ENCODE measurements at regions of chr1 and their contacts with region 1.

Region 1: DNA sequence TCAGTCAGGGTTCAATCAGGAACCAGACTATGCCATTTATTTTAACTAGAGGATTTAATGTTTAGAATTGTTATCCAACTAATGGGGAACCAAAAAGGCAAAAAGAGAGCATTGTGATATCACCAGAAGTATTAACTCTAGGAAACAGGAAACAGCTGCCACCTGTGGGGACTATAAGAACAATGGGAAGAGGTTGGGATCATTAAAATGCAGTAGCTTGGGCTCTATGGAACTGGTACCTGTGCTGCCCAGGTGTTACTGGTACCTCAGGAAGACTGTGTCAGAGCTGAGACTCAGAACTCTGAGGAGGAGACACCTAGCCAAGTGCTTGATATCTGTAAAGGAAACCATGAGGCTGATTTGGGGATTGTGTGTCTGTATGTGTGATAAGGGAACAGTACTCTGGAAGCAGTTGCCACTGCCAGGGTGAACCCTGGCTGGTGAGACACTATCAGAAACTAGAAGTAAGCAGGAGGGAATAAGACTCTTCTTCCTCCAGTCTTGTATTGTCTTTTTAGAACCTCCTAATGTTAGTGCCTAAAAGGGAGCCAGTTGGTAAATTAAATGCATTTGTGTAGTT is 49.4 kb downstream of the MAN1A2 start:
- DNase-seq: no peak
- ATAC-seq: no peak
- H3K4me3 ChIP-seq: no peak overlapping the region
- H3K4me3 Mint-ChIP-seq: no peak overlapping the region
- H3K27ac ChIP-seq: no peak overlapping the region
- H3K27ac Mint-ChIP-seq: peak overlapping the region; percentile 6
- H3K4me1 ChIP-seq: no peaks in the 10 kb centered on the region
- H3K4me1 Mint-ChIP-seq: peaks cover 37% of the 10 kb centered on the region
- H3K27me3 ChIP-seq: no peaks in the 10 kb centered on the region
- H3K27me3 Mint-ChIP-seq: no peaks in the 10 kb centered on the region
- CTCF ChIP-seq: no peak

Region 2: DNA sequence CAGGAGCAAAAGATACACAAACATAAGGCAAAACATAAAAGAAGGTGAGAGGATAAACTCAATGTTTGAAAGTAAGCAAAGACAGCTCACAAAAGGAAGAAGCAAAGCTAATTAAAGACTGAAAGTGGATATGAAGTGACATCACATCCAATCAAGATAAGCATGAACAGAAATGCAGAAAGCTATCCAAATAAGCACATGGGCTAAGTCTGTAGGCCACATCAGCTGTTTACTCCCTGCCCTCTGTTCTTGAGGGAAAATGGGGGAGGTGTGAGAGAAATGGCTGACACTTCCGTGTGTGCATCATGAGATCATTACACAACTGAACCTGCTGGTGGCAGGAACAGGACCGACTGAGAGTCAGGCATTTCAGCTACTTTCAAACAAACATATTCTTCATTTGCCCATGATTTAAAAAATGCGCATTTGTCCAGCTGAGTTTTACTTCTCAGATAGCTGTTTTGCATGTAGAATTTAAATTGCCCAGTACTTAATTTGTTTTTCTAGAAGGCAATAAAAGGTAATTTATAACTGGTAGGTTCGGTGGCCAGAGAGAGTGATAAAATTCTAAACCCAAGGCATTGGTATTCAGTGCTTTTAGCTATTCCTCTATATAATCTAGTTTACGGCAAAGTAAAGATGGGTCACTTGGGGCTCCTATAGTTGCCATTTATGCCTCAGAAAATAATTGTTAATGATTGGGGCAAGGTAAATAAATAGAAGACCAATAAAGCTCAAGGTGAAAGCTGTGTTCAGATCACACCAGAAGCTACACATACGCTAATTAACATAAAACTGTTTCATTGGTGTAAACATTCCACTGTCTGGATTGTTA is 76.6 kb before region 1 on chr1:
- CTCF ChIA-PET with region 1: no interaction called
- POLR2A ChIA-PET with region 1: no interaction called
- intact Hi-C with region 1: loop called in 1 of 2 experiments (anchors 5 kb)
- DNase-seq: peak in 3 of 9 experiments; percentile 36 to 66 (median 61)
- ATAC-seq: peak; percentile 90
- H3K4me3 ChIP-seq: no peak overlapping the region
- H3K4me3 Mint-ChIP-seq: no peak overlapping the region
- H3K27ac ChIP-seq: no peak overlapping the region
- H3K27ac Mint-ChIP-seq: no peak overlapping the region
- H3K4me1 ChIP-seq: no peaks in the 10 kb centered on the region
- H3K4me1 Mint-ChIP-seq: peaks cover 22% of the 10 kb centered on the region
- H3K27me3 ChIP-seq: no peaks in the 10 kb centered on the region
- H3K27me3 Mint-ChIP-seq: no peaks in the 10 kb centered on the region
- CTCF ChIP-seq: no peak

Region 3: DNA sequence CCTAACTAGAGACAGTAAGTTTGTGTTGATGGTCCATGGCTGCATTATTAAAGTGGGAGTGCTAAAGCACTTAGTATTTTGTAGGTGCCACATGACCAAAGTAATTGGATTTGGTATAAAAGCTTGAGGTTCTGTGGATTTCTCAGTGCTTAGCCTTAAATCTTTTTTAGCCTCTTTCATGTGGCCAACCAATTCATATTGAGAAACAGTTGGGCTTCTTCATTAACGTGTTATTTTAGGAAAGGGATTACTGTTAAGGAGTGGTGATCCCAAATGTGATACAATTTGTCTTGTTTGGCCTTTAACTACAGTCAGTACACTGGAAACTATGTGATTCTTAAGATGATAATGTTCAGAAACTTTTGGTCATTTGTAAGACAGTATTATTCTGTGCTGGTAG is 23.9 kb before region 1 on chr1:
- CTCF ChIA-PET with region 1: no interaction called
- POLR2A ChIA-PET with region 1: no interaction called
- intact Hi-C with region 1: loop called in 1 of 2 experiments (anchors 5 kb)
- DNase-seq: no peak
- ATAC-seq: no peak
- H3K4me3 ChIP-seq: no peak overlapping the region
- H3K4me3 Mint-ChIP-seq: no peak overlapping the region
- H3K27ac ChIP-seq: no peak overlapping the region
- H3K27ac Mint-ChIP-seq: no peak overlapping the region
- H3K4me1 ChIP-seq: peaks cover 27% of the 10 kb centered on the region
- H3K4me1 Mint-ChIP-seq: peaks cover 76% of the 10 kb centered on the region
- H3K27me3 ChIP-seq: no peaks in the 10 kb centered on the region
- H3K27me3 Mint-ChIP-seq: no peaks in the 10 kb centered on the region
- CTCF ChIP-seq: no peak

Region 4: GRCh38 chr1:117466761-117467160 is 50.1 kb after region 1 on chr1:
- CTCF ChIA-PET with region 1: no interaction called
- POLR2A ChIA-PET with region 1: no interaction called
- intact Hi-C with region 1: no loop called
- DNase-seq: no peak
- ATAC-seq: no peak
- H3K4me3 ChIP-seq: no peak overlapping the region
- H3K4me3 Mint-ChIP-seq: no peak overlapping the region
- H3K27ac ChIP-seq: no peak overlapping the region
- H3K27ac Mint-ChIP-seq: no peak overlapping the region
- H3K4me1 ChIP-seq: no peaks in the 10 kb centered on the region
- H3K4me1 Mint-ChIP-seq: no peaks in the 10 kb centered on the region
- H3K27me3 ChIP-seq: no peaks in the 10 kb centered on the region
- H3K27me3 Mint-ChIP-seq: no peaks in the 10 kb centered on the region
- CTCF ChIP-seq: no peak